ENCODE measurements at regions of chr4 and their contacts with region 1.

Region 1: GRCh38 chr4:73668782-73669201 is 48.6 kb upstream of the RASSF6 start:
- DNase-seq: no peak
- H3K4me3 ChIP-seq: no peak overlapping the region
- CTCF ChIP-seq: no peak

Region 2: GRCh38 chr4:72631296-72631695 is 1037.5 kb before region 1 on chr4:
- CTCF ChIA-PET with region 1: no interaction called
- POLR2A ChIA-PET with region 1: no interaction called
- DNase-seq: peak; percentile 9
- H3K4me3 ChIP-seq: no peak overlapping the region
- CTCF ChIP-seq: no peak

Region 3: GRCh38 chr4:73468170-73468569 is 200.6 kb before region 1 on chr4:
- CTCF ChIA-PET with region 1: no interaction called
- POLR2A ChIA-PET with region 1: no interaction called
- DNase-seq: no peak
- H3K4me3 ChIP-seq: no peak overlapping the region
- CTCF ChIP-seq: no peak

Region 4: GRCh38 chr4:73917081-73917501 is 248.3 kb after region 1 on chr4:
- CTCF ChIA-PET with region 1: interaction called, 215 read pairs
- POLR2A ChIA-PET with region 1: no interaction called
- DNase-seq: peak; percentile 87
- H3K4me3 ChIP-seq: no peak overlapping the region
- CTCF ChIP-seq: no peak